ENCODE measurements at regions of chr7 and their contacts with region 1.

Region 1: DNA sequence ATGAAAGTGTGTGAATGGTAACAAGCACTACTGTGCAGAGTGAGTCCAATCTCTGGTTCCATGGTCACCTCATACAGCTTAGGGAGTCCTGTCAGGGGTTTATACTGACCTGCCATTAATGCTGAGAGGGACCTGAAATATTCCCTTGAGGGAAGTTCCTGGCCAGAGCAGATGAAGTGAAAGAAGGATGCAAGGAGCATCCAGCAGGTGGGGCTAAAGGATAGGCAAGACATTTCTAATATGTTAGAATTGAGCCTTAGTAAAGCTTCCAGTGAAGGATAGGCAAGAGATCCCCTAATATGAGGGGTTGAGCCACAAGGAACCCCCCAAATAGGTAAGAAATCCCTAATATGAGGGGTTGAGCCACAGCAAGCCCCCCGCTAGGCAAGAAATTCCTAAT is 25.5 kb upstream of the FAM221A start:
- DNase-seq: no peak
- ATAC-seq: peak in 1 of 2 donors; percentile 29
- H3K4me3 ChIP-seq: no peak overlapping the region
- H3K27ac ChIP-seq: no peak overlapping the region
- H3K4me1 ChIP-seq: no peaks in the 10 kb centered on the region
- H3K27me3 ChIP-seq: no peaks in the 10 kb centered on the region

Region 2: GRCh38 chr7:23700059-23700458 is 45.6 kb after region 1 on chr7:
- intact Hi-C with region 1: loop called in 1 of 4 experiments (anchors 10 kb)
- DNase-seq: no peak
- ATAC-seq: no peak
- H3K4me3 ChIP-seq: no peak overlapping the region
- H3K27ac ChIP-seq: no peak overlapping the region
- H3K4me1 ChIP-seq: no peaks in the 10 kb centered on the region
- H3K27me3 ChIP-seq: no peaks in the 10 kb centered on the region

Region 3: DNA sequence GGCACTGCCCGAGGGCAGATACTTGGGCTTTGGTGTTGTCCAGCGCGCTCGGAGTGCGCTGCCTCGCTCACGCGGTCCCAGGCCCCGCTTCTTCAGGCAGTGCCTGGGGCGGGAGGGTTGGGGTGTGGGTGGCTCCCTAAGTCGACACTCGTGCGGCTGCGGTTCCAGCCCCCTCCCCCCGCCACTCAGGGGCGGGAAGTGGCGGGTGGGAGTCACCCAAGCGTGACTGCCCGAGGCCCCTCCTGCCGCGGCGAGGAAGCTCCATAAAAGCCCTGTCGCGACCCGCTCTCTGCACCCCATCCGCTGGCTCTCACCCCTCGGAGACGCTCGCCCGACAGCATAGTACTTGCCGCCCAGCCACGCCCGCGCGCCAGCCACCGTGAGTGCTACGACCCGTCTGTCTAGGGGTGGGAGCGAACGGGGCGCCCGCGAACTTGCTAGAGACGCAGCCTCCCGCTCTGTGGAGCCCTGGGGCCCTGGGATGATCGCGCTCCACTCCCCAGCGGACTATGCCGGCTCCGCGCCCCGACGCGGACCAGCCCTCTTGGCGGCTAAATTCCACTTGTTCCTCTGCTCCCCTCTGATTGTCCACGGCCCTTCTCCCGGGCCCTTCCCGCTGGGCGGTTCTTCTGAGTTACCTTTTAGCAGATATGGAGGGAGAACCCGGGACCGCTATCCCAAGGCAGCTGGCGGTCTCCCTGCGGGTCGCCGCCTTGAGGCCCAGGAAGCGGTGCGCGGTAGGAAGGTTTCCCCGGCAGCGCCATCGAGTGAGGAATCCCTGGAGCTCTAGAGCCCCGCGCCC is 629.6 kb after region 1 on chr7 and contains the start of gene NPY:
- intact Hi-C with region 1: no loop called
- DNase-seq: peak in 1 of 3 donors; percentile 21
- ATAC-seq: peak in 1 of 2 donors; percentile 16
- H3K4me3 ChIP-seq: no peak within 1 kb of the TSS
- H3K27ac ChIP-seq: no peak within 1 kb of the TSS
- H3K4me1 ChIP-seq: no peaks in the 10 kb centered on the region
- H3K27me3 ChIP-seq: no peaks in the 10 kb centered on the region
- total RNA-seq, gene NPY: not detected